Activated T-helper 1 cell treated with anti-CD3 and anti-CD28 coated beads, Interleukin-12 subunit alpha, Interleukin-12 subunit beta, Interleukin-2, Interleukin-4 antibody, amounts not matched to agents 30 ng/mL and 10 ng/mL and 1 ng/mL, durations not matched to agents 14 hours and 24 hours and 36 hours (primary cell): ENCODE measurements at regions of chr11 and their contacts with region 1.

Region 1: GRCh38 chr11:35165423-35166368 is 26.7 kb downstream of the CD44 start:
- DNase-seq: peak; percentile 92
- H3K4me3 Mint-ChIP-seq: peak overlapping the region; percentile 63
- H3K27ac Mint-ChIP-seq: peak overlapping the region; percentile 97
- H3K4me1 Mint-ChIP-seq: peaks cover 100% of the 10 kb centered on the region
- H3K27me3 Mint-ChIP-seq: no peaks in the 10 kb centered on the region

Region 2: DNA sequence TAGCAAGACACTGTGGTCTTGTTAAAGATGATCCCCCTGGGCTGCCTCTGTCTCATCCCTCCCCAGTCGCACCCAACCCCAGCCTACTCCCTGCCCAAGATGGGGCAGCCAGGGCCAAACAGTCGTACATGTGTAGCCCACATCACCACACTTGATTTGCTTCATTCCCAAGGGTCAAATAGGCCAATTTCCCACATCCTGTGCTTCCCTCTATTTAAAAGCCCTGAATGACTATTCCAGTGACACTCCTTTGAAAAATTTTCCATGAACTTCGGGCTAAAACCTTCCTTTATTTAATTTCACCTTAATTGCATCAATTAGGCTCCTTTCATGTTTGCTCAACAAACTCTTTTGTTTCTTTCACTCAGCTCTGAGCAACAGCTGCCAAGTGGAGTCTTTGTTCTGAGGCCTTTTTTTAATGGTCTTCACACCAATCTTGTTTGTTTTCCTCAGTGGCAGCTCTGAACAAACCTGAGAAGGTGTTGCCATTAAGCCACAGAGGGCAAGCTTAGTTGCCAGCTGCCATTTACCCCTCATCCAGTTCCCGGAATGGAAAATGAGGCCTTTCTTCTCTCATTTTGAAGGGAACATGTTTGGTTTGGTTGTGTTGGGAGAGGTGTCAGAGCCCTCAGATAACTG is 376.4 kb before region 1 on chr11:
- intact Hi-C with region 1: no loop called
- DNase-seq: no peak
- H3K4me3 Mint-ChIP-seq: no peak overlapping the region
- H3K27ac Mint-ChIP-seq: no peak overlapping the region
- H3K4me1 Mint-ChIP-seq: peaks cover 6% of the 10 kb centered on the region
- H3K27me3 Mint-ChIP-seq: peaks cover 3% of the 10 kb centered on the region

Region 3: DNA sequence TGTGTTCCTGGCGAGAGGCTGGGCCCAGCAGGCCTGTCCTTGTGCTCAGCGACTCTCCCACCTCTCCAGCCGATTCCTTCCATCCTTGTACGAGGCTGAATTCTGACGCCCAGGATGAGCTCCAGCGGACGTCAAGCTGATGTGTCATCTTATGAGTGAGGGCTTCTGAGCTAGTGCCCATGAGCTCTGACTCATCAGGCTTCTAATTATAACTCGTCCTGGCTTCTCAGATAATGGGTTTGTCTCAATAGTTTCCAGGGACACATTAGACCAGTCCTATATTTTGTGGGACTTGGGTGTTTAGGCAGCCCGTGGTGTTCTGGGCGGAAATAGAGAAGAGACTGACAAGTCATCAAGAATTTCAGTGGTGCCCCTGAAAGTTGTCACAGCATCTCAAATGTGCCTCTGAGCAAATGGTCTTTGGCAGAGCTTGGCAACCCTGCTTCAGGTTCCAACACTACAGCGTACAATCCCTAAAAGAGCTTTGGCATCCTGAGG is 134.9 kb before region 1 on chr11:
- intact Hi-C with region 1: loop called (anchors 1 kb)
- DNase-seq: no peak
- H3K4me3 Mint-ChIP-seq: peak overlapping the region; percentile 75
- H3K27ac Mint-ChIP-seq: peak overlapping the region; percentile 88
- H3K4me1 Mint-ChIP-seq: peaks cover 50% of the 10 kb centered on the region
- H3K27me3 Mint-ChIP-seq: peaks cover 8% of the 10 kb centered on the region

Region 4: DNA sequence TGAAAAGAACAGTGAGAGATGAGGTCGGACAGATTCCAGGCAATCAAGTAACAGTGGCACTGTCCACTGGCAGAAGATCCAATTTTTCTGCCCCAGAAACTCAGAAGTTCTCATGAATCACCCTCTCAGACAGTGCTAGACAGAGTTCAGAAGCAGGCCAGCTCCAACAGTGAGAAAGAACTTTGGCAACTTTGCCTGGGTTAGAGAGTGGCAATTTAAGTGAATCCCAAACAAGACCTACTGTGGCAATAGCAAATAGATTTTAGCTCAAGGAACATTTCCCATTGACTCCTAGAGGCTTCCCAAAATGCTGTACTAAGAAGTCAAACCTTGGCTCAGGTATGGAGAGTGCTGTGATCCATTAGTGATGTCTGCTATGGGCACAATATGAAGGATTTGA is 14.5 kb before region 1 on chr11:
- intact Hi-C with region 1: loop called (anchors 1 kb)
- DNase-seq: no peak
- H3K4me3 Mint-ChIP-seq: no peak overlapping the region
- H3K27ac Mint-ChIP-seq: peak overlapping the region; percentile 13
- H3K4me1 Mint-ChIP-seq: peaks cover 98% of the 10 kb centered on the region
- H3K27me3 Mint-ChIP-seq: no peaks in the 10 kb centered on the region